ENCODE measurements at regions of chr16 and their contacts with region 1.

Region 1: DNA sequence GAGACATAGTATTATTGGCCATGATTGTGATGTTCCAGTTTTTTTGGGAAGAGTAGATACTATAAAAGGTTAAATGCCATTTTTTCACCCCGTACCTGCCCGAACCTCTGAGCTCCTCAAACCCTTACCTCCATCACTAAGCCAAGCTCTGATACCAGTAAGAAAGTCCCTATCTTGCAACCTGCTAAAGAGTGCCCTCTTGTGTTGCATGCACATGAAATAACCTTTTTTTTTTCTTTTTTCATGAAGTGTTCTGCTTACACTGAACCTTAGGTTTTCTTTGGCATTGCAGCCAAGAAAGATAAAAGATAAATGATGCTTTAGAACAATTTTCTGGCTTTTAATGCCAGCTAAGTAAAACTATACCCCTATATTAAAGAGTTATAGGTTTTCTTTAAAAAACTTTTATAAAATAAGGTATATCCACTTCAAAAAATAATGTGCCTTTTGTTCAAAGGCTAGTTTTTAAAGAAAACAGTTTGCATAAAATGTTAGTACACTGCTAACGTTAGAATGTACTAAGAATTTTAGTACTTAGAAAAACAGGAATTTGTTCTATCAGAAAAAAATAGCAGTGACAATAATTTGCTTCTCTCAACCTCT is 295.3 kb upstream of the PMFBP1 start:
- DNase-seq: peak in 1 of 3 donors; percentile 35
- ATAC-seq: peak; percentile 68
- H3K4me3 ChIP-seq: no peak overlapping the region
- H3K4me1 ChIP-seq: no peaks in the 10 kb centered on the region
- CTCF ChIP-seq: no peak

Region 2: GRCh38 chr16:72124761-72125634 is 342.3 kb before region 1 on chr16:
- intact Hi-C with region 1: loop called in 1 of 2 experiments (anchors 5 kb)
- DNase-seq: peak; percentile 47 to 84 (median 69)
- ATAC-seq: peak; percentile 90
- H3K4me3 ChIP-seq: no peak overlapping the region
- H3K4me1 ChIP-seq: peaks cover 9% of the 10 kb centered on the region
- CTCF ChIP-seq: peak; percentile 57

Region 3: DNA sequence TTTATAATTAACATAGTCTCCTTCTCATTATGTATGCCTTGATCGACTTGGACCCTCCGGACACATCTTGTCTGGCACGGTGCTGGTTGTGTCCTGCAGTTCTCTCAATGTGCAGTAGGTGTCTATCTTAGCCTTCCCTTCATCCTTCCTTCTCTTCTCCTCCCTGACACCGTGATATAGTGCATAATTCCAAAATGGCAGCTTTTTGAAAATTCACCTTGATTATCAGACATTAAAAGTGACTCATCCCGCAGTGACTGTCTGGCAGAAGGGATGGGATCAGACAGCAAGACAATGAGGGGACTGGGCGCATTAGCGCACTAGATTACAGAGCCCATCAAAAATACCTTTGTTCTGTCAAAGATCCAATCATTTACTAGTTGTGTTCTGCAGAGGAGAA is 225.3 kb before region 1 on chr16:
- intact Hi-C with region 1: loop called in 1 of 2 experiments (anchors 5 kb)
- DNase-seq: peak in 1 of 3 donors; percentile 60
- ATAC-seq: peak; percentile 92
- H3K4me3 ChIP-seq: no peak overlapping the region
- H3K4me1 ChIP-seq: no peaks in the 10 kb centered on the region
- CTCF ChIP-seq: peak; percentile 55